ENCODE measurements at regions of chr18 and their contacts with region 1.

Region 1: DNA sequence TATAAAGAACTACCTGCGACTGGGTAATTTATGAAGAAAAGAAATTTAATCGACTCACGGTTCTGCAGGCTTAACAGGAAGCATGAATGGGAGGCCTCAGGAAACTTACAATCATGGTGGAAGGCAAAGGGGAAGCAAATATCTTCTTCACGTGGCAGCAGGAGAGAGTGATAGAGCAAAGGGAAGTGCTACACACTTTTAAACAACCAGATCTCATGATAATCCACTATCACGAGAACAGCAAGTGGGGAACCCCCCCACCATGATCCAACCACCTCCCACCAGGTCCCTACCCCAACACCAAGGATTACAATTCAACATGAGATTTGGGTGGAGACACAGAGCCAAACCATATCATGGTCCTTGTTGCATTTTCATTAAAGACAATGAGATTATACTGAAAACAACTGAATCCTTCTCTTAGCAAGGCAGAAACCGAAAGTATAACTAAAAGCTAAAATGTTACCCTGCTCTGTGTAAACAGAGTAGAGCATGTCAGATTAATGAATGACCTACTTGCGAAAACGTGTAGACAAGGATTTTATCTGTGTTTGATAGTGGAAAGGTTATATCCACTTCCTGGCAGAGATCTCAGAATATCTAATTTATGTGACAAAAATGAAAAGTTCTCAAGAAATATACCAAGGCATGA is 60.1 kb upstream of the RBBP8 start:
- DNase-seq: no peak
- H3K4me3 Mint-ChIP-seq: peak overlapping the region; percentile 55
- H3K27ac Mint-ChIP-seq: peak overlapping the region; percentile 85
- H3K4me1 Mint-ChIP-seq: peaks cover 35% of the 10 kb centered on the region
- H3K27me3 Mint-ChIP-seq: no peaks in the 10 kb centered on the region
- CTCF ChIP-seq: no peak

Region 2: GRCh38 chr18:22921772-22922171 is 48.7 kb after region 1 on chr18:
- CTCF ChIA-PET with region 1: no interaction called
- intact Hi-C with region 1: loop called (anchors 5 kb)
- DNase-seq: no peak
- H3K4me3 Mint-ChIP-seq: no peak overlapping the region
- H3K27ac Mint-ChIP-seq: no peak overlapping the region
- H3K4me1 Mint-ChIP-seq: peaks cover 15% of the 10 kb centered on the region
- H3K27me3 Mint-ChIP-seq: no peaks in the 10 kb centered on the region
- CTCF ChIP-seq: no peak